ENCODE measurements at regions of chr1 and their contacts with region 1.

Region 1: DNA sequence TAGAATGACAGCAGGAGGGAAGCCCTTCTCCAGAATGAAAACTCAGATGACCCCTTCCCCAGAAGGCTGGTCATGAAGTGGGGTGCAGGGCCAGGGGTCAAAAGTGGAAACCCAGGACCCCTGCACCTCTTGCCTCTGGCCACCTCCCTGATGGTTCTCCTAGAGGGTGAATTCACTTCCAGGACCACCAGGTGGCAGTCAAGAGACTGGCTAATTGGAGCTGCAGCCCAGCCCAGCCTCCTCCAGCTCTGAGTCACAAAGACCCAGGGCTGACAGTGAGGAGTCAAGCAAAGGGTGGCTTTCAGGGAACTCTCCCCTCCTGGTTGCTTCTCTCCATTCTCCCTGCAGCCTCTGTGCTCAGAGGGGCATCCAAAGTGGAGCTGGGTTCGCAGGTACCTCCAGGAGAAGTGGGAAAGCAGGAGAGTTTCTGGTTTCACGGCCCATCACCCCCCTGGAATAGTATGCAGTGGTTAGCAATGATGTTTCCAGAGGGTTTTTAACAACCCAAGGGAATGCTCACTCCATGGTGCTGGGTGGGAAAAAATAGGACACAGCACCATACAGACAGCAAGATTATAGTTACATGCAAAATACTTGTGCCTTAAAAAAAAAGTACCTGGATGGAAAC is 6.1 kb upstream of the EPHB2 start:
- DNase-seq: peak; percentile 86 to 89
- H3K4me3 ChIP-seq: no peak overlapping the region
- H3K4me3 Mint-ChIP-seq: no peak overlapping the region
- H3K27ac Mint-ChIP-seq: peak overlapping the region; percentile 63
- H3K4me1 ChIP-seq: peaks cover 34% of the 10 kb centered on the region
- H3K4me1 Mint-ChIP-seq: peaks cover 35% of the 10 kb centered on the region
- H3K27me3 ChIP-seq: no peaks in the 10 kb centered on the region
- H3K27me3 Mint-ChIP-seq: no peaks in the 10 kb centered on the region
- CTCF ChIP-seq: peak; percentile 86 to 92

Region 2: DNA sequence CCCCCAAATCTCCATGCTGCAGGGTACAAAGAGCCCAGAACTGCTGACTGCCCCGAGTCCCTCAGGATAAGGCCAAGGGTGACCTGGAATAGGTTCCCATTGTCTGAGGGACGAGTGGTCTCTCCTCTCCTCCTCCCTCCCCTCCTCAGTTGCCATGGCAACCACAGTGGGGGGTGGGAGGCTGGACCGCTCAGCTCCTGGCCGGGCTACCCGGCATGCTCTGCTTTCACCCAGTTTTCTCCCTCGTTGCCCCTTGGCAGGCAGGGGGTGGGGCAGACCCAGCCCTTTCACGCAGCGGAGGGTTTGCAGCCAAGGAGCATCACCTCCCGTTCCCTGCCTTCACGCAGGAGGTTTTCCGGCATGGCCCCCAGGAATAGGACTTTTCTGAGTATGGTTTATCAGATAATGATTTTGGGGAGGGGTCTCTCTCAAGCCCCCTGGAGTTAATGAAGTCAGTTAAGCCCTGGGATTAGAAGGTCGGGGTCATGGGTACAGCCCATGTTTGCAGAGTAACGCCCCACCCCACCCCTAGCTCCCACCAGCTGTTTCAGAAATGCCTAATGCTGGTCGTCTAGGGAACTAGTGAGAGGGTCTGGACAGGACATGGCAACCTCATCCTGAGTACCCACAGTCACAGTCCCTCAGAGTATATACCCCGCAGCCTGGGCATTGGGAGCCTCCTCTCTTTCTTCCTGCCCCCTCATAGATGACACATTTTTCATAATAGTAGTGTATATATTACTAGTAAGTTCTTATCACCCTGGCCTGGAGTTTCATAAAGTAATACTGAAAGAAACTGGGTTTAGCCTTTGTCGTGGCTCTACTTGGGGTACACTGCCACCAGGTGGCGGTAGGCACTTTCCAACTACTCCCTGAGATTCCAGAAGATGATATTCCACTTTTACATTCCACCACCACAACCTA is 30.8 kb before region 1 on chr1:
- CTCF ChIA-PET with region 1: interaction called, 6 read pairs
- POLR2A ChIA-PET with region 1: no interaction called
- intact Hi-C with region 1: loop called (anchors 1 kb)
- DNase-seq: peak in 1 of 2 experiments; percentile 64
- H3K4me3 ChIP-seq: no peak overlapping the region
- H3K4me3 Mint-ChIP-seq: no peak overlapping the region
- H3K27ac Mint-ChIP-seq: no peak overlapping the region
- H3K4me1 ChIP-seq: no peaks in the 10 kb centered on the region
- H3K4me1 Mint-ChIP-seq: no peaks in the 10 kb centered on the region
- H3K27me3 ChIP-seq: no peaks in the 10 kb centered on the region
- H3K27me3 Mint-ChIP-seq: peaks cover 3% of the 10 kb centered on the region
- CTCF ChIP-seq: peak; percentile 73

Region 3: DNA sequence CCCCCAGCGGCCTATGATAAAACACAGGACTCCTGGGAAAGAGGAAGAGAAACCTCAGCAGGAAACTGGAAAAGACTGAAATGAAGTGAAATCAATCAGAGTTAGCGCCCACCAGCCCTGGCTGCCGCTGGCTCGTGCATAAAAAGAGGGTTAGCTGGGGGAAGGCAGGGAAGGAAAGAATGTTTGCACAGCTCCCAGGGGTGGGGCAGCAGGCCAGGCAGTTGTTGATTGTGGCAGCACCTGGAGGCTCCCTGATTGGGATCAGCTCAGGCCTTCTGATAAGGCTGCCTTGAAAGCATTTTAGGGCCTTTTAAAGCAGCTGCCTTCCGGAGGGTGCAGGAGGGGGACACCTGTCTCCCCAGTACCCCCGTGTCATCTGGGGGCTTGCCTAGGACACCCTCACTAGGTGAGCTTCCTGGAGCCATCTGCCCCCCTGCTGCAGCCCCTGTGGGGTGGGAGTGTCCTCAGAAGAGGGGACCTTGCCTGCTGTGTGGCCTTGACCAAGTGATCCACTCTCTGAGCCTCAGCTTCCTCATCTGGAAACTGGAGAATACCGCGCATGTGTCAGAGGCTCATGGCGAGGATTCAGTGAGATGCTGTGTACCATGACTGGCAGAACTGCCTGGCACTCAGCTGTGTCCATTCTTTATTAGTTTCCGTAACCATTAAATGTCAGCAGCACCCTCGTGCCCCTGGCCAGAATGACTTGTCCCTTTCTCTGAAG is 12.6 kb after region 1 on chr1:
- CTCF ChIA-PET with region 1: interaction called, 21 read pairs
- POLR2A ChIA-PET with region 1: interaction called, 3 read pairs
- intact Hi-C with region 1: no loop called
- DNase-seq: peak; percentile 84 to 86
- H3K4me3 ChIP-seq: no peak overlapping the region
- H3K4me3 Mint-ChIP-seq: peak overlapping the region; percentile 53
- H3K27ac Mint-ChIP-seq: peak overlapping the region; percentile 80
- H3K4me1 ChIP-seq: peaks cover 26% of the 10 kb centered on the region
- H3K4me1 Mint-ChIP-seq: peaks cover 18% of the 10 kb centered on the region
- H3K27me3 ChIP-seq: no peaks in the 10 kb centered on the region
- H3K27me3 Mint-ChIP-seq: no peaks in the 10 kb centered on the region
- CTCF ChIP-seq: no peak

Region 4: GRCh38 chr1:22794647-22795365 is 90.3 kb after region 1 on chr1:
- CTCF ChIA-PET with region 1: interaction called, 6 read pairs
- POLR2A ChIA-PET with region 1: no interaction called
- intact Hi-C with region 1: loop called (anchors 5 kb)
- DNase-seq: no peak
- H3K4me3 ChIP-seq: no peak overlapping the region
- H3K4me3 Mint-ChIP-seq: no peak overlapping the region
- H3K27ac Mint-ChIP-seq: no peak overlapping the region
- H3K4me1 ChIP-seq: peaks cover 16% of the 10 kb centered on the region; the same call in 1 of the 2 replicates
- H3K4me1 Mint-ChIP-seq: peaks cover 18% of the 10 kb centered on the region
- H3K27me3 ChIP-seq: no peaks in the 10 kb centered on the region
- H3K27me3 Mint-ChIP-seq: no peaks in the 10 kb centered on the region
- CTCF ChIP-seq: no peak

Region 5: DNA sequence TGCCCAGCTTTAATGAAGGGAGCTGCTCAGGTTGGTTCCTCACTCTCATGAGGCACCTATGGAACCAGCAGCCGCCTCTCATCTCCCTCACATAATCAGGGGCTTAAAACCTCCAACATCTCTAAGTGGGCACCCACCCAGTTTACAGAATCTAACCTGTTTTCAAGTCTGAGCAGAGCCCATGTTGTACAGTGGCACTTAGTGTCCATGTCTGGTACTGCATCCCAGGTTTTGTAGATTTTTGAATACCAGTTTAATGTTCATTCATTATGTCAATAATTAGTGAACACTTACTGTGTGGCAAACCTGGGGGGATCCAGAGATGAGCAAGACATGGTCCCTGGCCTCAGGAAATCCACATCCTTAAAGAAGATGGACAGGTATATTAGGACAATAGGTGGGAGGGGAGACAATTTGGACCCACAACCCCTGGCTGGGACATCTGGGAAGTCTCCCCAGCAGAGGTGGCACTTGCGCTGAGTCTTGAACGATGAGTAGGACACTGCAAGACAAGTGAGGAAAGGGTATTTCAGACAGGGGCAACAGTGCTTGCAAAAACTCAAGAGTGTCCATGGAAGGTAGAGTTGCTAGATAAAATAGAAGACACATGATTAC is 184.8 kb after region 1 on chr1:
- CTCF ChIA-PET with region 1: interaction called, 12 read pairs
- POLR2A ChIA-PET with region 1: no interaction called
- intact Hi-C with region 1: loop called (anchors 1 kb)
- DNase-seq: peak in 1 of 2 experiments; percentile 23
- H3K4me3 ChIP-seq: no peak overlapping the region
- H3K4me3 Mint-ChIP-seq: no peak overlapping the region
- H3K27ac Mint-ChIP-seq: no peak overlapping the region
- H3K4me1 ChIP-seq: no peaks in the 10 kb centered on the region
- H3K4me1 Mint-ChIP-seq: no peaks in the 10 kb centered on the region
- H3K27me3 ChIP-seq: no peaks in the 10 kb centered on the region
- H3K27me3 Mint-ChIP-seq: no peaks in the 10 kb centered on the region
- CTCF ChIP-seq: peak; percentile 58 to 86